Heart right ventricle (tissue), 16 donors: ENCODE measurements at regions of chr2 and their contacts with region 1.

Region 1: GRCh38 chr2:118580651-118581050 is 266.8 kb downstream of the EN1 start:
- DNase-seq: no peak
- ATAC-seq: no peak
- H3K4me3 ChIP-seq: no peak overlapping the region
- H3K27ac ChIP-seq: no peak overlapping the region
- H3K4me1 ChIP-seq: peaks cover 0 to 3% (median 0%) of the 10 kb centered on the region in 9 donors
- H3K27me3 ChIP-seq: peaks cover 0 to 17% (median 7%) of the 10 kb centered on the region in 7 donors
- CTCF ChIP-seq: no peak

Region 2: DNA sequence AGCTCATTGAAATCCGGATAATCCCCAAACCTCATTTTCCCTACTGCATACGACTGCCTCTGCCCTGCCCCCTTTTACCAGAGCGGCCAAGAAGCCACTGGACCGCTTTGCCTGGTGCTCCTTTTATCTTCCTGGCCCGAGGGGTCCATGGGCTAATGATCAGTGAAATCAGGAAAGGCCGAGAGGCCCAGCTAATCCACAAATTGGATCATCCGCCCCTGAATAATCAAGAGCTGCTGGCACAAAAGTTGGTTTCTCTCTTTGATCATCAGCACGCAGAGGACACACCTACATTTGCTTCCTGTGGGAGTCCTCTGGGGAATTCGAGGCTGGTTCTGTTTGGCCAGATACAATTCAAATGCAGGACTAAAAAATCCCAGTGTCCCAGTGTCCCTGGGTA is 347.9 kb before region 1 on chr2:
- intact Hi-C with region 1: loop called in 1 of 10 experiments (anchors 5 kb)
- DNase-seq: no peak
- ATAC-seq: no peak
- H3K4me3 ChIP-seq: no peak overlapping the region
- H3K27ac ChIP-seq: no peak overlapping the region
- H3K4me1 ChIP-seq: no peaks in the 10 kb centered on the region
- H3K27me3 ChIP-seq: peaks cover 0 to 88% (median 57%) of the 10 kb centered on the region in 7 donors
- CTCF ChIP-seq: no peak

Region 3: DNA sequence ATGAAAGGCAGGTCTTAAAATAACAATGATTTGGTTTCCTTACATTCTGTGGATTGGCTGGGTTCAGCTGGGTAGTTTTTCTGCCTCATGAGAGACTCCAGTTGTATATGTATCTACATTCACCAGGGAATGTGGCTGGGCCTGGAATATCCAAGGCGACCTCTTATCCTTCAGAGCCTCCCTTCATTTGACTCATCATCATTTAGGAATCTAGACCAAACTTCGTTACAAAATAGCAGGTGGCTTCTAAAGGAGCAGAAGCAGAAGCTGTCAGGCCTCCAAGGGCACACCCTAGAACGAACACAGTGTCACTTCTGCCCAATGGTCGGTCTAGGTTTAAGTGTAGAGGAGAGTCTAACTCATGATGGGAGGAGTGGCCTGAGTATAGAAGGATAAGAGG is 62.6 kb after region 1 on chr2:
- intact Hi-C with region 1: no loop called
- DNase-seq: no peak
- ATAC-seq: no peak
- H3K4me3 ChIP-seq: no peak overlapping the region
- H3K27ac ChIP-seq: no peak overlapping the region
- H3K4me1 ChIP-seq: no peaks in the 10 kb centered on the region
- H3K27me3 ChIP-seq: peaks cover 0 to under 1% (median 0%) of the 10 kb centered on the region in 7 donors
- CTCF ChIP-seq: no peak